PC-3 (cell line): ENCODE measurements at regions of chr14 and their contacts with region 1.

Region 1: DNA sequence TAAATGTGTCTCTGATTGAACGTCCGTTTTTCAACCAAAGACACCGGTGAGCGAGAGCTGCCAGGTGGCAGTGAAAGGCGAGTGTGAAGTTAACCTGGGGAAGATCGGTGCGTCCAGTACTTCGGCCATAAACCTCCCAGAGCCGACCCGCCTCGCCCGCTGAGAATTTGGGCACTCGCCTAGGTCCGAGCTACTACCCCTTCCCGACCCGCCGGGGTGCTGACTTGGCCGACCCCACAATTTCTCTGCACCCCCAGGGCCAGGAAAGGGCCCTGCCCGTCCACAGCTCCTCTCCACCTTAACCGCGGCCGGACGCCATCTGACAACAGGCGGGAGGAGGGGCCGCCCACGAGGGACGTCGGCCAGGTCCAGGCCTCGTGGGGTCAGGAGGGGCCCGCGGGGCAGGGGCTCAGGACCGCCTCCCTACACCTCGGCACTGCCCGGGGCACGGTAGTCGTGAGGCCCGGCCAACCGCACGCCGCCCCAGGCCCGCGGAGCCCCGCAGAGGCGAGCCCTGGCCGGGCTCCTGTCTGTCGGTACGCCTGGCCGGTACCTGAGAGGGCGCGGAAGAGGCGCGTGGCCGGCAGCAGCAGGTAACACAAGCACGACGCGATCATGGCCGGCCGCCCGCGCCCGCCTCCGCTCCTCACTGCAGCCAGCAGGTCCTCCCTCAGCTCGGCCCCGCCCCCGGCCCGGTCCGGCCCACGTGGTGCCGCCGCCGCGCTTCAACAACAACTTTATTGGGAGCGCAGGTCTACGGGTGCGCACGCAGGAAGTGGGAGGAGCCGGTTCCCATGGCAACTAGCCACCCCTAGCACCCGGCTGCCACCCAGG is at the start of gene ANGEL1:
- DNase-seq: peak; percentile 94
- ATAC-seq: peak; percentile 86
- H3K4me3 ChIP-seq: peak within 1 kb of the TSS; percentile 93
- H3K27ac ChIP-seq: 0 out of 2 replicates have a peak within 1 kb of the TSS, but pooled peaks have one; percentile 6
- H3K4me1 ChIP-seq: peaks cover 5% of the 10 kb centered on the region
- H3K27me3 ChIP-seq: peaks cover 12% of the 10 kb centered on the region
- CTCF ChIP-seq: no peak
- total RNA-seq, gene ANGEL1: 9.2 and 12.4 TPM in 2 replicates

Region 2: DNA sequence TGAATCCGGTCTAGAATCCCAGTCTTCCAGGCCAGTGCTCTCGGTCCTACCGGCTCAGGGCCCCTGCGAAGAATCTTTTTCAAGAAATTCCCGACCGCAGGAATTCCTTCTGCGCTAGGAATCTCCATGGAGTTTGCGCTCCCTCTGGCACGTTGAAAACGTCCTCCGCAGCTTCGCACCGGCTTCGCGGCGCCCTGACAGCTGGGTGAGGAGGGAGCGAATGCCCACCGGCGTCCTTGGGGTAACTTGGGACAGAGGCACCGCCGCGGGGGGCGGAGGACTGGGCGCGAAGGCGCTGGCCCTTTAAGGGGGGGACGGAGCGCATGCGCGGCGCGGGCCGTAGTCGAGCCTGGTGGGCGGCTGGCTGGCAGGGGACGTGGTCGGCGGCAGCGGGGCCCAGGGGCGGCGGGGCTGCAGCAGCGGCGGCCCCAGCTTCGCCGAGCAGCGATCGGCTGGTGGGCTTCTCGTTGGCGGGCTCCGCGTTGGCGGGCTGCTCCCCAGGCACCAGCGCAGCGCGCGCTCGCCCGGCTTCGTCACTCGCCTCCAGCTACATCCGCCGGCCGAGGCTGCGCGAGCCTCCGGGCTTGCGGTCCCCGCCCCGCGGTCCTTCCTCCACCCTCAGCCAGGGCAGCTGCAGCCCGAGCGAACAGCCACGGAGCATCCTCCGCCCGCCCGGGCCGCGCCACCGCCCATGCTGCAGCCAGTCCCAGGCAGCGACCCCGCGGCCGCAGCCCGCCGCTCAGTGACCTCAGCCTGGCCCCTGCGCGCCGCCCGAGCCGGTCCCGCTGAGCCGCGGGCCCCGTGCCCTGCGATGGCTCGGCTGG is 51.1 kb before region 1 on chr14 and contains the start of gene VASH1:
- CTCF ChIA-PET with region 1: interaction called, 3 read pairs
- POLR2A ChIA-PET with region 1: no interaction called
- intact Hi-C with region 1: loop called (anchors 5 kb)
- DNase-seq: peak; percentile 70
- ATAC-seq: peak; percentile 96
- H3K4me3 ChIP-seq: peak within 1 kb of the TSS; percentile 77
- H3K27ac ChIP-seq: no peak within 1 kb of the TSS
- H3K4me1 ChIP-seq: peaks cover 10% of the 10 kb centered on the region; the same call in 1 of the 2 replicates
- H3K27me3 ChIP-seq: peaks cover 10% of the 10 kb centered on the region; the same call in 1 of the 2 replicates
- CTCF ChIP-seq: no peak
- total RNA-seq, gene VASH1: 1.3 and 1.8 TPM in 2 replicates

Region 3: DNA sequence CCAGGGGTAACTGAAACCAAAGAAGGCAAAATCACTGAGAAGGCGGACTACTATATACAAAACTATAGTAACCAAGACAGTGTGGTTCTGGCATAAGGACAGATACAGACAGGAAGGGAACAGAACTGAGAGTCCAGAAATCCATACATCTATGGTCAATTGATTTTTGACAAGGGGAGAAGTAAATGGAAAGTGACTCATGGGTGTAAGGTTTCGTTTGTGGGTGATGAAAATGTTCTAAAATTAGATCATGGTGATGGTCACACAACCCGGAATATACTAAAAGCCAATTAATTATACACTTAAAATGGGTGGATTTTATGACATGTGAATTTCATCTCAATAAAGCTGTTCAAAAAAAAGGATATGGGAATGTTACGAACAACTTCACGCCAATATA is 18.5 kb before region 1 on chr14:
- CTCF ChIA-PET with region 1: no interaction called
- POLR2A ChIA-PET with region 1: no interaction called
- intact Hi-C with region 1: no loop called
- DNase-seq: no peak
- ATAC-seq: no peak
- H3K4me3 ChIP-seq: no peak overlapping the region
- H3K27ac ChIP-seq: no peak overlapping the region
- H3K4me1 ChIP-seq: no peaks in the 10 kb centered on the region
- H3K27me3 ChIP-seq: no peaks in the 10 kb centered on the region
- CTCF ChIP-seq: no peak

Region 4: GRCh38 chr14:76962303-76962660 is 149.9 kb after region 1 on chr14:
- CTCF ChIA-PET with region 1: no interaction called
- POLR2A ChIA-PET with region 1: no interaction called
- intact Hi-C with region 1: loop called (anchors 5 kb)
- DNase-seq: no peak
- ATAC-seq: peak; percentile 4
- H3K4me3 ChIP-seq: peak overlapping the region; percentile 59
- H3K27ac ChIP-seq: peak overlapping the region; percentile 86
- H3K4me1 ChIP-seq: peaks cover 49% of the 10 kb centered on the region
- H3K27me3 ChIP-seq: no peaks in the 10 kb centered on the region
- CTCF ChIP-seq: no peak